ENCODE measurements at regions of chr13 and their contacts with region 1.

Region 1: GRCh38 chr13:110937511-110938285 is 22.8 kb upstream of the ANKRD10 start:
- DNase-seq: no peak
- ATAC-seq: no peak
- H3K4me3 ChIP-seq: no peak overlapping the region
- H3K27ac ChIP-seq: no peak overlapping the region
- H3K4me1 ChIP-seq: no peaks in the 10 kb centered on the region
- H3K27me3 ChIP-seq: no peaks in the 10 kb centered on the region
- CTCF ChIP-seq: no peak
- POLR2A ChIP-seq: no peak

Region 2: DNA sequence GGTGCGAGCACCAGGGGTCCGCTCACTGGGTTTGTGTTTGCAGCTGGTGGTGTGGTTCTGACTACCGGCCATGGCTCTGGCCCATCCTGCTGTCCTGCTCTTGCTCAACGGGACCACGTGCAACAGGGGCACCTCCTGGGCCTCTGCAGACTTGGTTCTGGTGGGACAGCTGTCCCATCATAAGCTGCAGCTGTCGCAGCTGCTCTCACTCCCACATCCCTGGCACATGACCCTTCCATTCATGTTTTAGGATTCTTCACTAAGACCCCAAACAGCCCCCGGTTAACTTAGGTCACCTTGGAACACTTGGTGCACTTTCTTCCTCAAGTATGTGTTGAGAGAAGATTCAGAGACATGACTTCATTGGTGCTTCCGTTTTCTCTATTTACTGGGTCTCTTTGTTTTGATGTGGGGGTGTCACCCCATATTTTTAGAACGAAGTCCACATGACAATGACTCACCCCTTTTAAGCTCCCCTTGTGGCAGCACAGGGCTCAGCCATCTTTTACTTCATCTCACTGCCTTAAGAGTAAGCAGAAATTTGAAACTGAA is 109.0 kb after region 1 on chr13:
- intact Hi-C with region 1: loop called (anchors 10 kb)
- DNase-seq: no peak
- ATAC-seq: no peak
- H3K4me3 ChIP-seq: no peak overlapping the region
- H3K27ac ChIP-seq: no peak overlapping the region
- H3K4me1 ChIP-seq: peaks cover 5% of the 10 kb centered on the region
- H3K27me3 ChIP-seq: no peaks in the 10 kb centered on the region
- CTCF ChIP-seq: no peak
- POLR2A ChIP-seq: no peak

Region 3: GRCh38 chr13:111354789-111355188 is 417.1 kb after region 1 on chr13:
- intact Hi-C with region 1: no loop called
- DNase-seq: no peak
- ATAC-seq: no peak
- H3K4me3 ChIP-seq: no peak overlapping the region
- H3K27ac ChIP-seq: no peak overlapping the region
- H3K4me1 ChIP-seq: no peaks in the 10 kb centered on the region
- H3K27me3 ChIP-seq: no peaks in the 10 kb centered on the region
- CTCF ChIP-seq: no peak
- POLR2A ChIP-seq: no peak